ENCODE measurements at regions of chr22 and their contacts with region 1.

Region 1: DNA sequence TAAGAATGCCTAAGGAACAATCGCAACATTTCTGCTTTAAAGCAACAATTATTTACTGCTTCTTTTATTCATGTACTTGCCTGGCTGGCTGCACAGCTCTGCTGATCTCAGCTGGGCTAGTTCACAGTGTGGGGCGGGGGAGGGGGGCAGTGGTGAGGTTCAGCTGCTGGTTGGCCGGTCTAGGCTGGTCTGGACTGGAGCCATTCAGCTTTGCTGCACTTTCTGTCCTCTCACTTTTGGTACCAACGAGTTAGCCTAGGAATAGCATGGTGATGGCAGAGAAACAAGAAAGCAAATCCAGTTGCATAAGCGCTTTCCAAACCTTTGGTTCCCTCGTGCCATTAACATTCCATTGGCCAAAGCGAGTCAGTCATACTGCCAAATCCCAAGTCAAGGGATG is 16.0 kb upstream of the MIF start:
- DNase-seq: no peak
- H3K4me3 ChIP-seq: no peak overlapping the region
- H3K27ac ChIP-seq: no peak overlapping the region
- H3K4me1 ChIP-seq: no peaks in the 10 kb centered on the region
- H3K27me3 ChIP-seq: no peaks in the 10 kb centered on the region

Region 2: GRCh38 chr22:23857606-23858483 is 20.4 kb before region 1 on chr22 and contains the start of gene SLC2A11:
- CTCF ChIA-PET with region 1: interaction called, 15 read pairs
- POLR2A ChIA-PET with region 1: no interaction called
- DNase-seq: peak; percentile 97 to 99 (median 98)
- H3K4me3 ChIP-seq: peak within 1 kb of the TSS; percentile 60 to 97 (median 81)
- H3K27ac ChIP-seq: peak within 1 kb of the TSS in 1 of 2 experiments; percentile 67
- H3K4me1 ChIP-seq: peaks cover 8 to 26% (median 24%) of the 10 kb centered on the region in 4 experiments
- H3K27me3 ChIP-seq: no peaks in the 10 kb centered on the region